Endothelial cell of umbilical vein (primary cell): ENCODE measurements at regions of chr1 and their contacts with region 1.

Region 1: GRCh38 chr1:34984793-34985608 is at the start of gene TMEM35B:
- DNase-seq: peak; percentile 70
- H3K4me3 ChIP-seq: peak within 1 kb of the TSS; percentile 81 to 90 (median 89)
- H3K27ac ChIP-seq: peak within 1 kb of the TSS; percentile 82
- H3K4me1 ChIP-seq: peaks cover 15% of the 10 kb centered on the region
- H3K27me3 ChIP-seq: no peaks in the 10 kb centered on the region
- CTCF ChIP-seq: peak in 1 of 2 donors; percentile 8
- POLR2A ChIP-seq: peak; percentile 82
- total RNA-seq, gene TMEM35B: 18.7 and 19.1 TPM in 2 replicates

Region 2: GRCh38 chr1:35079003-35079930 is 94.3 kb after region 1 on chr1 and contains the start of gene ZMYM1:
- CTCF ChIA-PET with region 1: interaction called, 3 read pairs
- POLR2A ChIA-PET with region 1: no interaction called
- dilution Hi-C with region 1: no loop called
- intact Hi-C with region 1: loop called (anchors 2 kb)
- DNase-seq: peak; percentile 95
- H3K4me3 ChIP-seq: peak within 1 kb of the TSS; percentile 41 to 78 (median 74)
- H3K27ac ChIP-seq: peak within 1 kb of the TSS; percentile 60
- H3K4me1 ChIP-seq: peaks cover 12% of the 10 kb centered on the region
- H3K27me3 ChIP-seq: no peaks in the 10 kb centered on the region
- CTCF ChIP-seq: no peak
- POLR2A ChIP-seq: peak; percentile 84
- total RNA-seq, gene ZMYM1: 20.7 and 21.4 TPM in 2 replicates

Region 3: GRCh38 chr1:35112668-35113067 is 127.7 kb after region 1 on chr1:
- CTCF ChIA-PET with region 1: no interaction called
- POLR2A ChIA-PET with region 1: no interaction called
- dilution Hi-C with region 1: no loop called
- intact Hi-C with region 1: loop called (anchors 5 kb)
- DNase-seq: peak; percentile 9
- H3K4me3 ChIP-seq: no peak overlapping the region
- H3K27ac ChIP-seq: no peak overlapping the region
- H3K4me1 ChIP-seq: peaks cover 9% of the 10 kb centered on the region
- H3K27me3 ChIP-seq: no peaks in the 10 kb centered on the region
- CTCF ChIP-seq: no peak
- POLR2A ChIP-seq: no peak

Region 4: GRCh38 chr1:35173909-35174540 is 189.0 kb after region 1 on chr1:
- CTCF ChIA-PET with region 1: no interaction called
- POLR2A ChIA-PET with region 1: no interaction called
- dilution Hi-C with region 1: loop called (anchors 25 kb)
- intact Hi-C with region 1: no loop called
- DNase-seq: no peak
- H3K4me3 ChIP-seq: no peak overlapping the region
- H3K27ac ChIP-seq: no peak overlapping the region
- H3K4me1 ChIP-seq: no peaks in the 10 kb centered on the region
- H3K27me3 ChIP-seq: no peaks in the 10 kb centered on the region
- CTCF ChIP-seq: no peak
- POLR2A ChIP-seq: no peak